ENCODE measurements at regions of chr1 and their contacts with region 1.

Region 1: GRCh38 chr1:46442317-46443161 is 47.1 kb upstream of the DMBX1 start:
- DNase-seq: peak; percentile 71
- H3K4me3 ChIP-seq: peak overlapping the region; percentile 20 to 36 (median 34)
- H3K27ac ChIP-seq: no peak overlapping the region
- H3K4me1 ChIP-seq: no peaks in the 10 kb centered on the region
- H3K27me3 ChIP-seq: peaks cover under 1% of the 10 kb centered on the region
- CTCF ChIP-seq: peak; percentile 78 to 80

Region 2: GRCh38 chr1:46477153-46477929 is 34.8 kb after region 1 on chr1:
- CTCF ChIA-PET with region 1: no interaction called
- dilution Hi-C with region 1: no loop called
- in situ Hi-C with region 1: no loop called
- intact Hi-C with region 1: loop called (anchors 2 kb)
- DNase-seq: peak; percentile 58
- H3K4me3 ChIP-seq: no peak overlapping the region
- H3K27ac ChIP-seq: no peak overlapping the region
- H3K4me1 ChIP-seq: no peaks in the 10 kb centered on the region
- H3K27me3 ChIP-seq: no peaks in the 10 kb centered on the region
- CTCF ChIP-seq: peak; percentile 86 to 90

Region 3: DNA sequence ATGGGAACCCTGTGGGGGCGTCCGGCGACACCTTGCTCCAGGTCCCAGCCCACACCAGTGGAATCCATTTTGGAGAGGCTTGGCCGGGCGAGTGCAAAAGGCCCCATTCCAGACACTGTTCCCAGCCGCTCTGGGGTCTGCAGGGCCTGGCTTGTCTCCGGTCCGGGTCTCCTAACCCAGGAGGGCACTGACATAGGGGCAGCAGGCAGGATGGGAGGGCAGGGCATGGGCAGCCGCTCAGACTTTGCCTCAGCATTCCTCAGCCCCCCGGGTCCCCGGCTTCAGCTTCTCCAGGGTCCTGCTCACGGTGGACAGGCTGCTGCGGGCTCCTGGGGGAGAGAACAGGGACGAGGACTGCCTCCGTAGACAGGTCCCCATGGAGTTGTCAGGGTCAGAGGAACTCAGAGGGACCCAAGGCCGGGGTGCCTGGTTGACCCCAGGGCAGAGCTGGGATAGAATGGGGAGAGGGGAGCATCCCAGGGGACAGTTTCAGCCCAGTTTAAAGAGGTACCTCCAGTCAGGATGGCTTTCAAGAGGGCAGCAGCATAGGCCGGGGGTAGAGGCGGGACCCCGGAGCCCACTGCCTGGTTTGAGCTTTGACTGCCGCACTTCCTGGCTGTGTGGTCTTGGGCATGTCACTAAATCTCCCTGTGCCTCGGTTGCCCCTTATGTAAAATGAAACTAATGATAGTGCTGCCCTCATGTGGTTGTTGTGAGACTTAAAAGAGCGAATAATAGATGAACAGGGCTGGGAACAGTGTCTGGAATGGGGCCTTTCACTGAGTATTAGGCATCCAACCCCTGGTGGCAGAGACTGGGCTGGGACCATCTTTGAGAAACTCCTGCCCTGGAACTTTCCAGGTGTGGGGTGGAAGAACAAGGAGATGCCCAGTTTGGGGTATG is 105.2 kb after region 1 on chr1:
- CTCF ChIA-PET with region 1: no interaction called
- dilution Hi-C with region 1: no loop called
- in situ Hi-C with region 1: no loop called
- intact Hi-C with region 1: loop called (anchors 1 kb)
- DNase-seq: peak; percentile 35
- H3K4me3 ChIP-seq: no peak overlapping the region
- H3K27ac ChIP-seq: no peak overlapping the region
- H3K4me1 ChIP-seq: no peaks in the 10 kb centered on the region
- H3K27me3 ChIP-seq: peaks cover 20% of the 10 kb centered on the region
- CTCF ChIP-seq: peak; percentile 53 to 55

Region 4: GRCh38 chr1:46718727-46719622 is 276.4 kb after region 1 on chr1 and contains the start of gene EFCAB14:
- CTCF ChIA-PET with region 1: no interaction called
- dilution Hi-C with region 1: no loop called
- in situ Hi-C with region 1: loop called in 1 of 2 experiments (anchors 25 kb)
- intact Hi-C with region 1: loop called (anchors 1 kb)
- DNase-seq: peak; percentile 97
- H3K4me3 ChIP-seq: peak within 1 kb of the TSS; percentile 93 to 94 (median 93)
- H3K27ac ChIP-seq: peak within 1 kb of the TSS; percentile 72
- H3K4me1 ChIP-seq: peaks cover 21% of the 10 kb centered on the region
- H3K27me3 ChIP-seq: no peaks in the 10 kb centered on the region
- CTCF ChIP-seq: no peak
- total RNA-seq, gene EFCAB14: 51.3 to 70.5 TPM

Region 5: DNA sequence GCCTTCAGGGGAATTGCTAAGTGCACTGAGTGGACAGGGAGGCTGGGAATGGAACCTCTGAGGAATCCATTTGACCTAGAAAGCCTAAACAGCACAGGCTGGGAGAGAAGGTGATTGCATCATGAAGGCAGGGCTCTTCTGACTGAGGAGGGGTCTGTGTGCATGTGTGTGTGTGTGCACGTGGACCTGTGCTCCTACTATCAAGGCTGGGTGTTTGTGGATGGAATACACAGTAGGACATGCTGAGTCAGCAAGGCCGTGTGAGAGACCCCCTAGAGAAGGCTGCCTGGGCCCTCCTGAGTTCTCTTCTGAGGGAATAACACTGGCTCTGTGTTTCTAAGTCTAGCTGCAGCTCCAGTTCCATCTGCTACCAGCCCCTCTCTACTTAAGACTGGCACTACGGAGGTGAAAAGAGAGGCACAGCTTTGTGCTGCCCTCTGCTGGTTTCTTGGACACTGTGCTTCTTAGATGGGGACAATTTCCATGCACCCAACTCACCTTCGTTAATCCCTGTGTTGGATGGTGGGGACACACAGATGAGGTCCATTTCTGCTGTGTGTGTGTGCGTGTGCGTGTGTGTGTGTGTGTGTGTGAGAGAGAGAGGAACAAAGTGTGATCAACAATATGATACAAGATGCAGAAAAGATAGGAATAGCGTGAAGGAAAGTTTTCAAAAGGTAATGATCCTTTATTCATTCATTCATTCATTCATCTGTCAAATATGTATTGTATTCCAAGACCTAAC is 282.6 kb after region 1 on chr1:
- CTCF ChIA-PET with region 1: no interaction called
- dilution Hi-C with region 1: no loop called
- in situ Hi-C with region 1: loop called in 1 of 2 experiments (anchors 25 kb)
- intact Hi-C with region 1: loop called (anchors 1 kb)
- DNase-seq: peak; percentile 58
- H3K4me3 ChIP-seq: no peak overlapping the region
- H3K27ac ChIP-seq: no peak overlapping the region
- H3K4me1 ChIP-seq: peaks cover 9% of the 10 kb centered on the region
- H3K27me3 ChIP-seq: no peaks in the 10 kb centered on the region
- CTCF ChIP-seq: peak; percentile 91 to 92

Region 6: DNA sequence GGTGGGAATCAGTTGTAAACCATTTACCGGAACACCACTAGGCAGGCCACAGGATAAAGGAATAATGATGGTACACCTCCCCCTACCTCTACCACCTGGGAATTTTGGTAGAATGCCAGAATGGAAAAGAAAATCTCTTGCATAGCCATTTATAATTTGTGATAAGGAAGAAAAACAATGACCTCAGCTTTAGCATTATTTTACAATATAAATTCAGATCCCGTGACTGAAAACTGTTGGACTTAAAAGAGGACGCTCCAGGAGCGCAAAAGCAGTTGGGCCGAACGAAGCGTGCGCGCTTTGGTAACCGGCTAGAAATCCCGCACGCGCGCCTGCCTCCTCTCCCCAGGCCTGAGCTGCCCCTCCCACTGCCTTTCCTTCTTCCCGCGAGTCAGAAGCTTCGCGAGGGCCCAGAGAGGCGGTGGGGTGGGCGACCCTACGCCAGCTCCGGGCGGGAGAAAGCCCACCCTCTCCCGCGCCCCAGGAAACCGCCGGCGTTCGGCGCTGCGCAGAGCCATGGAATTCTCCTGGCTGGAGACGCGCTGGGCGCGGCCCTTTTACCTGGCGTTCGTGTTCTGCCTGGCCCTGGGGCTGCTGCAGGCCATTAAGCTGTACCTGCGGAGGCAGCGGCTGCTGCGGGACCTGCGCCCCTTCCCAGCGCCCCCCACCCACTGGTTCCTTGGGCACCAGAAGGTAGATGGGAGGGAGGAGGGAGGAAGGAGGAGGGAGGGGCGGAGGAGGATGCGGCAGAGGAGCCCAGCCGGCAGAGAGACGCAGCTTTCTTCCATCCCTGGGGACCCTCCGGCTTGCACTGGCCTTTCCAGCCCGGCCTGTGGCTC is 581.0 kb after region 1 on chr1 and contains the start of gene CYP4X1:
- CTCF ChIA-PET with region 1: no interaction called
- dilution Hi-C with region 1: no loop called
- in situ Hi-C with region 1: loop called in 1 of 2 experiments (anchors 25 kb)
- intact Hi-C with region 1: no loop called
- DNase-seq: no peak
- H3K4me3 ChIP-seq: peak within 1 kb of the TSS; percentile 42 to 47 (median 44)
- H3K27ac ChIP-seq: no peak within 1 kb of the TSS
- H3K4me1 ChIP-seq: peaks cover 8% of the 10 kb centered on the region
- H3K27me3 ChIP-seq: peaks cover 4% of the 10 kb centered on the region
- CTCF ChIP-seq: no peak
- total RNA-seq, gene CYP4X1: under 0.01 TPM in 1 of 2 donors, not detected in the other

Measured in mammary epithelial cell (primary cell).